Mammary epithelial cell (primary cell): ENCODE measurements at regions of chr10 and their contacts with region 1.

Region 1: GRCh38 chr10:110279407-110279986 is 25.2 kb downstream of the SMNDC1 start:
- DNase-seq: peak; percentile 43
- H3K4me3 ChIP-seq: no peak overlapping the region
- H3K27ac ChIP-seq: no peak overlapping the region
- H3K4me1 ChIP-seq: peaks cover 7% of the 10 kb centered on the region
- H3K27me3 ChIP-seq: no peaks in the 10 kb centered on the region
- CTCF ChIP-seq: peak; percentile 75

Region 2: DNA sequence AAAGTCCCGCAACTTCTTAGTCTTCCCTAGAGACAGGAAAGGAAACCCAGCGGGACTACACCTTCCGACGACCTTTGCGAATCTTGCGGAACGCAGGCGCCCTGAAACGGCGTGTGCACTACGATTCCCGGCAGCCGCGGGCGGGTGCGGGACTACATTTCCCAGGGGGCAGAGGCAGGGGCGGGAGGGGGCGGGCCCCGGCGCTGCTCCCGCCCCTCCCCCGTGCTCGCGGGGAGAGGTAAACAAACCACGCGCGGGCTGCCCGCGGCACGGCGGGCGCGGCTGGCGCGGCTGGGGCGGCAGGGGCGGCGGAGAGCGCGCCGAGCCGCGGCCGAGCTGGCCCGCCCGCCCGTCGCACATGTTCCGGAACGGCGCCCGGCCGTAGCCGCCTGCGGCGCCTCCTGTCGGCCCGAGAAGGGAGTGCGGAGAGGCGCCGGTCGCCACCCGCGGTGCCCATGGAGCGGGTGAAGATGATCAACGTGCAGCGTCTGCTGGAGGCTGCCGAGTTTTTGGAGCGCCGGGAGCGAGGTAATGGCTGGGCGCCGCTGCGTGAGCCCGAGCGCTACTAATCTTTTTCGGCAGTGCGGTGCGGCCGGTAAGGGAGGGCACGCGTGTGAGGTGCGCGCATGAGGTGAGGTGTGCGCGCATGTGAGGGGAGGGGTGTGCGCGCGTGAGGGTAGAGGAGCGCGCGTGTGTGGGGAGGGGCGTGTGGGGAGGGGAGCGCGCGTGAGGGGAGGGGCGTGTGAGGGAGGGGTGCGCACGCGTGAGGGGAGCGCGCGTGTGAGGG is 53.5 kb before region 1 on chr10:
- CTCF ChIA-PET with region 1: interaction called, 5 read pairs
- dilution Hi-C with region 1: no loop called
- in situ Hi-C with region 1: no loop called
- intact Hi-C with region 1: loop called (anchors 1 kb)
- DNase-seq: peak; percentile 92
- H3K4me3 ChIP-seq: peak overlapping the region; percentile 73 to 95 (median 92)
- H3K27ac ChIP-seq: peak overlapping the region; percentile 43
- H3K4me1 ChIP-seq: peaks cover 33% of the 10 kb centered on the region
- H3K27me3 ChIP-seq: no peaks in the 10 kb centered on the region
- CTCF ChIP-seq: peak; percentile 54 to 71

Region 3: DNA sequence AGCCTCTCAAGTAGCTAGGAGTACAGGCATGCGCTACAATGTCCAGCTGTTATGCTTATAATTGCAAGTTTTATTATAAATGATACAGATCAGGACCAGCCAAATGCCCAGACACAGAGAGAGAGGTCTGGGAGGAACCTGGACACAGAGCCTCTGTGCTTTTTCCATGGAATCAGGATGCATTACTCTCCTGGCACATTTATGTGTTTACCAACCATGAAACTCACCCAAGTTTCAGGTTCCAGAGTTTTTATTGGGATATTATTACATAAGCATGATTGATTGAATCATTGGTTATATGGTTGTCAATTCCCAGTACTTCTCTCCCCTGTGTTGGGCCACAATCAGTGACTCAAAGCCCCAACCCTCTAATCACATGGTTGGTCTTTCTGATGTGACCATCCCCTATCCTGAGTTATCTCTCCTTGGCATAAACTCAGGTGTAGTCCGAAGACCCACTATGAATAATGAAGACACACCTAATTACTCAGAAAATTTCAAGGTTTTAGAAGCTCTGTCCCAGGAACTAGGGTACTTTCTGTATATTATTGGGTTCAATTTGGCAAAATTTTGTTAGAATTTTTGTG is 41.5 kb before region 1 on chr10:
- CTCF ChIA-PET with region 1: no interaction called
- dilution Hi-C with region 1: no loop called
- in situ Hi-C with region 1: no loop called
- intact Hi-C with region 1: no loop called
- DNase-seq: no peak
- H3K4me3 ChIP-seq: no peak overlapping the region
- H3K27ac ChIP-seq: no peak overlapping the region
- H3K4me1 ChIP-seq: no peaks in the 10 kb centered on the region
- H3K27me3 ChIP-seq: no peaks in the 10 kb centered on the region
- CTCF ChIP-seq: no peak